ENCODE measurements at regions of chr6 and their contacts with region 1.

Region 1: GRCh38 chr6:107318100-107318736 is 141.1 kb downstream of the PDSS2 start:
- DNase-seq: no peak
- H3K4me3 ChIP-seq: no peak overlapping the region
- H3K27me3 ChIP-seq: no peaks in the 10 kb centered on the region
- CTCF ChIP-seq: peak; percentile 91

Region 2: GRCh38 chr6:107140581-107140980 is 177.6 kb before region 1 on chr6:
- CTCF ChIA-PET with region 1: no interaction called
- POLR2A ChIA-PET with region 1: no interaction called
- DNase-seq: no peak
- H3K4me3 ChIP-seq: no peak overlapping the region
- H3K27me3 ChIP-seq: no peaks in the 10 kb centered on the region
- CTCF ChIP-seq: no peak

Region 3: GRCh38 chr6:107154131-107154800 is 164.0 kb before region 1 on chr6:
- CTCF ChIA-PET with region 1: no interaction called
- POLR2A ChIA-PET with region 1: no interaction called
- DNase-seq: no peak
- H3K4me3 ChIP-seq: no peak overlapping the region
- H3K27me3 ChIP-seq: no peaks in the 10 kb centered on the region
- CTCF ChIP-seq: no peak

Region 4: DNA sequence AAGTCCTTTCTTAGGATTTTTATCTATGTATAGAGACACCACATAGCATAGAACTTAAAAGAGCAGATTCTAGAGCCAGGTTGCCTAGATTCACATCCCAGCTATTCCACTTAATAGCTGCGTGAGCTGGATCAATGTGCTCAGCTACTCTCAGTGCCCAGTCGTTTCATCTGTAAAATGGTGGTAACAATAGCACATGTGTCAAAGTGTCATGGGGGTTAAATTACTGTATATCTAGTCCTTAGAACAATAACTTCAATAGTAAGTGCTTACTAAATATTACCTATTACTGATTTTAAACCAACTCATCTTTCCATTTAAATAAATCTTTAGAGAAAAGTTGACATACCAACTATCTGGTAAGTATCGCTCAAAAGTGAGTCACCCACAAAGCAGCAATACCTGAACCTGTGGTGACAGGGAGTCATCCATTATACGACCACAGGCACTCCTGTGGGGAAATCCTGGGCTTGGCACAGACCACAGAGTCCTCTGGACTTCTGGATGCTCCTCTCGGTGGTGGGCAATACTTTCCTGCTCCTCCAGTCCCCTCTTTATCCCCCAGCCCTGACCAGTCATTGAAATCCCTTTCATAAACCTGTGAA is 13.7 kb before region 1 on chr6:
- CTCF ChIA-PET with region 1: interaction called, 10 read pairs
- POLR2A ChIA-PET with region 1: no interaction called
- DNase-seq: no peak
- H3K4me3 ChIP-seq: no peak overlapping the region
- H3K27me3 ChIP-seq: no peaks in the 10 kb centered on the region
- CTCF ChIP-seq: no peak

Region 5: DNA sequence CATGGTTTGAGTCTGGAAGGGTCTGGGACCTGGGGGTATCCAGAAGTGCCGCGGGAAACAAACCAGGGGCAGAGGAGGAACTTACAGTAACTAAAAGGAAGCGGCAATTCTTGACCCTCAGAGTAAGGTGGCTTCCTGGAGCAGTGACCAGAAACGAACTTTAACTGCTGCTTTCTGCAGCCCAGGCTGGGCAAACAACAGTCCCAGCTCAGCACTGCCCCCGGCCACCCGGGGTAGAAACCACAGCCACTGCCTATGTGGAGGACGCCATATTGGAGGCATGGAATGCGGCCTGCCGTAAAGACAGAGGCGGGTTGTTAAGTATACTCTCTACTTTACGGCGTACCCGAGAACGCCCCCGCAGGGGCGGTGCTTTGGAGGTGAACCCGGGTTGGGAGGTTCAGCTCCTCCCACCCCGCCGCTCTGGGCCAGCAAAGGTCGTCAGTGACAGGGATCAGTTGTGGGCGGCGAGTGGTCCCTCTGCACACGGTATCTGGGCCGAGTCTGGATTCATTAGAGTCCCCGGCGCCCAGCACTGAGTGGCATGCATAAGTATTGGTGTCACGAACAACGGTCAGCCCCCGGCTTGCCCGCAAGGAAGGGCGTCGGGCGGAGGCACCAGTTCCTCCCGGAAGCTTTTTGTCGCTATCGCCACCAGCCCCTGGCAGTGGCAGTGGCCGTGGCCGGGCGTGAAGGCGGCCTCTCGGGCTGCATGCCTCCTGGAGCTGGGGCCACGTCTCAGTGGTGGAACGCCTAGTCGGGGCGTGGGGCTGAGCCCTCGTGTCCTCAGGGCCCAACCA is 141.3 kb after region 1 on chr6 and contains the start of gene PDSS2:
- CTCF ChIA-PET with region 1: interaction called, 11 read pairs
- POLR2A ChIA-PET with region 1: no interaction called
- DNase-seq: peak; percentile 75
- H3K4me3 ChIP-seq: peak within 1 kb of the TSS; percentile 56
- H3K27me3 ChIP-seq: no peaks in the 10 kb centered on the region
- CTCF ChIP-seq: peak; percentile 68
- polyA plus RNA-seq, gene PDSS2: 11.6 and 13.9 TPM in 2 replicates

Measured in BJ (cell line).